OCI-LY7 (cell line): ENCODE measurements at regions of chr16 and their contacts with region 1.

Region 1: GRCh38 chr16:85305996-85306792 is 193.9 kb upstream of the CIBAR2 start:
- DNase-seq: peak; percentile 91
- H3K4me3 ChIP-seq: no peak overlapping the region
- H3K27ac ChIP-seq: peak overlapping the region; percentile 96
- H3K4me1 ChIP-seq: peaks cover 86% of the 10 kb centered on the region
- CTCF ChIP-seq: no peak

Region 2: GRCh38 chr16:84717484-84717883 is 588.7 kb before region 1 on chr16:
- CTCF ChIA-PET with region 1: interaction called, 3 read pairs
- POLR2A ChIA-PET with region 1: no interaction called
- intact Hi-C with region 1: loop called (anchors 5 kb)
- DNase-seq: no peak
- H3K4me3 ChIP-seq: no peak overlapping the region
- H3K27ac ChIP-seq: no peak overlapping the region
- H3K4me1 ChIP-seq: peaks cover 22% of the 10 kb centered on the region
- CTCF ChIP-seq: no peak

Region 3: DNA sequence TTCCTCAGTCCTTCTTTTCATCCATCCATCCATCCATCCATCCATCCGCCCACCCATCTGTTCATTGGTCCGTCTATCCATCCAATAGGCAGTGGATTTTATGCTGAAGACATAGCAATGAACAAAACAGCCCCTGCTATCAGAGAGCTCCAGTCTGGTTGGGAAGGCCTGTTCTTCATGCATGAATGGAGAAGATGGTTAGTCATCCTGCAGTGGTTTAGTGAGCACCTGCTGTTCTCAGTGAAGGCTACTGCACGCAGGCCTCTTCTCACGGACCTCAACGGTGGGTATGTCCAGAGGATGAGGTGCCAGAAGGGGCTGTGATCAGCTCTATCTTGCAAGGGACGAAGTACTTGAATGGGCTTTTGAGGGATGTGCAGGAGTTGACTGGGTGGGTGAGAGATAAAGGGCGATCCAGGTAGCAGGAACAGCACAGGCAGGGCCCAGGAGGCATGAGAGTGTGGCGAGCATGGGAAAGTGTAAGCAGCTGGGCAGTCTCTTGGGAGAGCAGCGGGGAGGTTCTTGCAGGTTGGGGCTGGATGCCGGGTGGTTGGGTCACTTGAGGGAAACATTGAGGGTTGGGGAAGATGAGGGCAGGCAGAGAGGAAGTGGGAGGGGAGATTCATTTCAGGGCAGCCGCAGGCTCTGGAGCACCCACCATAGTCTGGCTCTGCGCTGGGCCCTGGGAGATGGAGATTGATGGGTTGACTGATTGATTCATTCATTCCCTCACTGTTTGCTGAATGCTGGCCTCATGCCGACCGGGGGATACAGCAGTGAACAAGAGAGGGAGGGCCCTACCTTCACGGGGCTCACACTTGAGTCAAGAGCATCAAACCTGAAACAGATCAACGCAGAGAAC is 78.9 kb before region 1 on chr16:
- CTCF ChIA-PET with region 1: no interaction called
- POLR2A ChIA-PET with region 1: no interaction called
- intact Hi-C with region 1: no loop called
- DNase-seq: peak; percentile 76
- H3K4me3 ChIP-seq: no peak overlapping the region
- H3K27ac ChIP-seq: peak overlapping the region; percentile 47
- H3K4me1 ChIP-seq: peaks cover 24% of the 10 kb centered on the region
- CTCF ChIP-seq: no peak

Region 4: GRCh38 chr16:85330694-85331188 is 24.5 kb after region 1 on chr16:
- CTCF ChIA-PET with region 1: interaction called, 7 read pairs
- POLR2A ChIA-PET with region 1: interaction called, 6 read pairs
- intact Hi-C with region 1: loop called (anchors 1 kb)
- DNase-seq: peak; percentile 87
- H3K4me3 ChIP-seq: no peak overlapping the region
- H3K27ac ChIP-seq: no peak overlapping the region
- H3K4me1 ChIP-seq: peaks cover 55% of the 10 kb centered on the region
- CTCF ChIP-seq: peak; percentile 80

Region 5: GRCh38 chr16:85393674-85394483 is 87.7 kb after region 1 on chr16:
- CTCF ChIA-PET with region 1: no interaction called
- POLR2A ChIA-PET with region 1: interaction called, 3 read pairs
- intact Hi-C with region 1: loop called (anchors 1 kb)
- DNase-seq: peak; percentile 73
- H3K4me3 ChIP-seq: no peak overlapping the region
- H3K27ac ChIP-seq: no peak overlapping the region
- H3K4me1 ChIP-seq: peaks cover 13% of the 10 kb centered on the region
- CTCF ChIP-seq: peak; percentile 89

Region 6: DNA sequence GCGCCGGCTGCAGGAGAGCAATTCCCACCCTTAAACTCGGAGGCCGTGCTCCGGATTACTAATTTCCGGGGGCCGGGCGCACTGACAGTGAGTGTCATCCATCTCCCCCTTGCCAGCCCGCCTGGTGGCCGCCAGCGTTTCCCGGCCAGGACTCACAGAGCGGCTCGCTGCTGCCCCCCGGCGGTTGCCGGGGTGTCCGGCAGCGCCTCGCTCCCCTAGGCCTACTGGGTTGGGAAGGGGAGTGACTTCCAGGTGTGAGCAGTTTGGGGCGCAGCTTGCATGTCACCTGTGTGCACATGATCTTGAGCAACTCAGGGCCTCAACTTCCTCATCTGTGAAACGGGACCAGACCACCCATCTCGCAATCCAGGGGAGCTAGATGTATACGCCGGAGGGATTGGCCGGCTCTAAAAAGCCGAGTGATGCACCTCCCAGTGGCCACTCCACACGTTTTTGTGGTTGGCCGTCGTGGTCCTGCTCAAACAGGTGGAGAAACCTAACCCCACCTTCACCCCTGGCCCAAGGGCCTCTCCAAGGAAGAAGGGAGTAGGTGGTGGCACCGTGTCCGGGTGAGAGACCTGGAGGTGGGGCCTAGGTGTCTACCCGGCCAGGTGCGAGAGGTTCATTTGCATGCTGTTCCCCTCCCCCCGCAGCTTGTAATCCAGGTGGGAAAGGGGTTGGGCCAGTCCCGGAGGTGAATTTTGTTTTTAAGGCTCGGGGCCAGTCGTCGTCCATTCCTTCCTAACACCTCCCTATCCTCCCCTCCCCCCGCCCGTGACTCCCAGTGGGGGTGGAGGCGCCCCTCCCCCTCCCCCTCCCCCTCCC is 304.5 kb after region 1 on chr16:
- CTCF ChIA-PET with region 1: no interaction called
- POLR2A ChIA-PET with region 1: no interaction called
- intact Hi-C with region 1: loop called (anchors 2 kb)
- DNase-seq: peak; percentile 91
- H3K4me3 ChIP-seq: peak overlapping the region; percentile 76
- H3K27ac ChIP-seq: peak overlapping the region; percentile 86
- H3K4me1 ChIP-seq: peaks cover 75% of the 10 kb centered on the region
- CTCF ChIP-seq: peak; percentile 94